H1 (cell line): ENCODE measurements at regions of chr7 and their contacts with region 1.

Region 1: GRCh38 chr7:100949227-100949932 is at the start of gene MUC3A:
- DNase-seq: peak in 1 of 2 experiments; percentile 66
- H3K4me3 ChIP-seq: peak within 1 kb of the TSS in 1 of 4 experiments; percentile 41; a peak in 3 of 8 replicates
- H3K27ac ChIP-seq: no peak within 1 kb of the TSS
- H3K4me1 ChIP-seq: peaks cover 9 to 33% (median 27%) of the 10 kb centered on the region in 4 experiments
- H3K27me3 ChIP-seq: peaks cover 0 to 3% (median 0%) of the 10 kb centered on the region in 4 experiments; a peak in 3 of 7 replicates
- CTCF ChIP-seq: no peak
- EP300 ChIP-seq: no peak
- POLR2A ChIP-seq: no peak
- RAD21 ChIP-seq: no peak
- total RNA-seq, gene MUC3A: 43.9 and 44.6 TPM in 2 replicates

Region 2: DNA sequence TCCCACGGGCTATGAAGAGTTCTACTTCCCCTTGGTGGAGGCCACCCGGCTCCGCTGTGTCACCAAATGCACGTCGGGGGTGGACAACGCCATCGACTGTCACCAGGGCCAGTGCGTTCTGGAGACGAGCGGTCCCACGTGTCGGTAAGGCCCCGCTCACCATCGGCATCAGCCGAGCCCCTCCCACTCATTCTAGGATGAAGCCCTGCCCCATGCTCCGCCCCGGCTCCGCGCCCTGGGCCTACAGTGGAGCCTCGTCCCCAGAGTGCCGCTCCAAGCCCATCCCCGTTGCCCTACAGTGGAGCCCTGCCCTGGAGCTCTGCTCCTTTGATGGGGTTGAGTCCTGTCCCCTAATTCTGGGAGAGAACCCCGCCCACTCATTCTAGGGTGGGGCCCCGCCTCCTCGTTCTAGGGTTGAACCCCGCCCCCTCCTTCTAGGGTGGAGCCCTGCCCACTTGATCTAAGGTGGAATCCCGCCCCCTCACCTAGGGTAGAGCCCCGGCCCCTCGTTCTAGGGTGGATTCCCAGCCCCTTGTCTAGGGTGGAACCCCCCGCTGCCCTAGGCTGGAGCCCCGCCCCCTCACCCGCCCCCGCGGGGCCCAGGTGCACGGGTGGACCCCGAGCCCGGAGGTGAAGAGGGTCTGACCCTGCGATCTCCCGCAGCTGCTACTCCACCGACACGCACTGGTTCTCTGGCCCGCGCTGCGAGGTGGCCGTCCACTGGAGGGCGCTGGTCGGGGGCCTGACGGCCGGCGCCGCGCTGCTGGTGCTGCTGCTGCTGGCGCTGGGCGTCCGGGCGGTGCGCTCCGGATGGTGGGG is 16.6 kb after region 1 on chr7:
- CTCF ChIA-PET with region 1: interaction called, 12 read pairs
- POLR2A ChIA-PET with region 1: interaction called, 11 read pairs
- DNase-seq: peak; percentile 97 to 100
- H3K4me3 ChIP-seq: peak overlapping the region; percentile 36 to 79 (median 60)
- H3K27ac ChIP-seq: no peak overlapping the region
- H3K4me1 ChIP-seq: peaks cover 4 to 32% (median 26%) of the 10 kb centered on the region in 4 experiments
- H3K27me3 ChIP-seq: peaks cover 3 to 18% (median 14%) of the 10 kb centered on the region in 4 experiments
- CTCF ChIP-seq: peak in 2 of 3 experiments; percentile 96 to 98; a peak in 3 of 4 replicates
- EP300 ChIP-seq: peak in 1 of 2 experiments; percentile 69; a peak in 1 of 3 replicates
- POLR2A ChIP-seq: no peak
- RAD21 ChIP-seq: peak; percentile 79 to 92

Region 3: GRCh38 chr7:101077303-101078089 is 128.1 kb after region 1 on chr7:
- CTCF ChIA-PET with region 1: interaction called, 11 read pairs
- POLR2A ChIA-PET with region 1: no interaction called
- DNase-seq: peak; percentile 89 to 98
- H3K4me3 ChIP-seq: no peak overlapping the region
- H3K27ac ChIP-seq: no peak overlapping the region
- H3K4me1 ChIP-seq: no peaks in the 10 kb centered on the region
- H3K27me3 ChIP-seq: no peaks in the 10 kb centered on the region
- CTCF ChIP-seq: peak; percentile 94 to 98 (median 96)
- EP300 ChIP-seq: peak in 1 of 2 experiments; percentile 54; a peak in 1 of 3 replicates
- POLR2A ChIP-seq: no peak
- RAD21 ChIP-seq: peak; percentile 97